ENCODE measurements at regions of chr1 and their contacts with region 1.

Region 1: GRCh38 chr1:27300341-27301051 is 21.5 kb upstream of the TMEM222 start:
- DNase-seq: peak; percentile 77
- ATAC-seq: peak; percentile 97
- H3K4me3 Mint-ChIP-seq: no peak overlapping the region
- H3K27ac Mint-ChIP-seq: no peak overlapping the region
- H3K4me1 Mint-ChIP-seq: peaks cover 4% of the 10 kb centered on the region
- H3K27me3 Mint-ChIP-seq: no peaks in the 10 kb centered on the region
- CTCF ChIP-seq: peak; percentile 99

Region 2: GRCh38 chr1:27111626-27112573 is 188.6 kb before region 1 on chr1:
- CTCF ChIA-PET with region 1: interaction called, 10 read pairs
- POLR2A ChIA-PET with region 1: no interaction called
- intact Hi-C with region 1: no loop called
- DNase-seq: peak; percentile 92
- ATAC-seq: peak; percentile 97
- H3K4me3 Mint-ChIP-seq: peak overlapping the region; percentile 49
- H3K27ac Mint-ChIP-seq: peak overlapping the region; percentile 90
- H3K4me1 Mint-ChIP-seq: peaks cover 55% of the 10 kb centered on the region
- H3K27me3 Mint-ChIP-seq: no peaks in the 10 kb centered on the region
- CTCF ChIP-seq: no peak

Region 3: GRCh38 chr1:27275696-27276095 is 24.8 kb before region 1 on chr1:
- CTCF ChIA-PET with region 1: interaction called, 15 read pairs
- POLR2A ChIA-PET with region 1: no interaction called
- intact Hi-C with region 1: no loop called
- DNase-seq: no peak
- ATAC-seq: no peak
- H3K4me3 Mint-ChIP-seq: no peak overlapping the region
- H3K27ac Mint-ChIP-seq: no peak overlapping the region
- H3K4me1 Mint-ChIP-seq: peaks cover 11% of the 10 kb centered on the region
- H3K27me3 Mint-ChIP-seq: no peaks in the 10 kb centered on the region
- CTCF ChIP-seq: no peak

Region 4: GRCh38 chr1:27321813-27322577 is 21.5 kb after region 1 on chr1 and contains the start of gene TMEM222:
- CTCF ChIA-PET with region 1: interaction called, 10 read pairs
- POLR2A ChIA-PET with region 1: interaction called, 3 read pairs
- intact Hi-C with region 1: no loop called
- DNase-seq: peak; percentile 97
- ATAC-seq: peak; percentile 98
- H3K4me3 Mint-ChIP-seq: peak within 1 kb of the TSS; percentile 95
- H3K27ac Mint-ChIP-seq: peak within 1 kb of the TSS; percentile 95
- H3K4me1 Mint-ChIP-seq: peaks cover 39% of the 10 kb centered on the region
- H3K27me3 Mint-ChIP-seq: no peaks in the 10 kb centered on the region
- CTCF ChIP-seq: no peak
- total RNA-seq, gene TMEM222: 22.0 to 25.4 TPM

Region 5: GRCh38 chr1:27357281-27358037 is 57.0 kb after region 1 on chr1:
- CTCF ChIA-PET with region 1: interaction called, 85 read pairs
- POLR2A ChIA-PET with region 1: interaction called, 4 read pairs
- intact Hi-C with region 1: no loop called
- DNase-seq: peak; percentile 89
- ATAC-seq: peak; percentile 67
- H3K4me3 Mint-ChIP-seq: peak overlapping the region; percentile 75
- H3K27ac Mint-ChIP-seq: peak overlapping the region; percentile 90
- H3K4me1 Mint-ChIP-seq: peaks cover 44% of the 10 kb centered on the region
- H3K27me3 Mint-ChIP-seq: peaks cover 2% of the 10 kb centered on the region
- CTCF ChIP-seq: peak; percentile 99

Region 6: GRCh38 chr1:27603681-27604578 is 303.4 kb after region 1 on chr1 and contains the start of gene AHDC1:
- CTCF ChIA-PET with region 1: interaction called, 27 read pairs
- POLR2A ChIA-PET with region 1: no interaction called
- intact Hi-C with region 1: no loop called
- DNase-seq: peak; percentile 96
- ATAC-seq: peak; percentile 79
- H3K4me3 Mint-ChIP-seq: peak within 1 kb of the TSS; percentile 93
- H3K27ac Mint-ChIP-seq: peak within 1 kb of the TSS; percentile 85
- H3K4me1 Mint-ChIP-seq: peaks cover 41% of the 10 kb centered on the region
- H3K27me3 Mint-ChIP-seq: no peaks in the 10 kb centered on the region
- CTCF ChIP-seq: no peak
- total RNA-seq, gene AHDC1: 26.3 to 27.6 TPM

Measured in activated CD8-positive, alpha-beta T cell treated with anti-CD3 and anti-CD28 coated beads for 36 hours (primary cell).